ENCODE measurements at regions of chr19 and their contacts with region 1.

Region 1: DNA sequence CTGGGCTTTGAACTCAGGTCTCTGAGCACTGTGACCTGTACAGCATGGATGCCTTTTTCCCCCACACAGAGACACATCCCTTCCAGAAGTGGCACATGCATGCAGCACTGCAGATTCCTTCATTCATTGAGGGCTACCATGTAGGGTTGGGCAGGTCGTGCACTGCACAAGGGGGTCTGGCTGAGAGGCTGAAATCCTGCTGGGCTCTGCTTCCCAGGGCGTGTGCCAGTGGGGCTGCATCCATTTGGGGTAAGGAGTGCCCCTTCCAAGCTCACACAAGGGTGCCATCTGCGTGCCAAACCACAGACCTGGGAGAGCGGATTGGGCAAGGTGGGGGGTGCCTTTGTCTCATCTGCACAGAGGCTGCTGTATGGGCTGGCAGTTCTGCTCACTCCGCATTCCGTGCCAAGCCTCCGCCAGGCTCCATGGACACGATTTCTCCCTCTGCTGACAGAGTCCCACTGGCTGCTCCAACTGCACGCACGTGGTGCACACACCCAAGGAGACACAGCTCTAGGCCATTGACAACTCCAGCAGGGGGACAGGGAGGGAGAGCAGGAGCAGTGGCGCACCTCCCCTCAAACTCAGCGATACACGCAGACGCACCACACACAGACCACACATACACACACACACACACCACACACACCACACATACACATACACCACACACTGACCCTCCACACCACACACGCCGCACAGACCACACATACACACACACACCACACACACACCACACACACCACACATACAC is 4.5 kb upstream of the SHISA7 start:
- DNase-seq: peak; percentile 96
- H3K4me3 Mint-ChIP-seq: no peak overlapping the region
- H3K27ac Mint-ChIP-seq: no peak overlapping the region
- H3K4me1 Mint-ChIP-seq: peaks cover 27% of the 10 kb centered on the region
- H3K27me3 Mint-ChIP-seq: peaks cover 29% of the 10 kb centered on the region
- CTCF ChIP-seq: no peak

Region 2: DNA sequence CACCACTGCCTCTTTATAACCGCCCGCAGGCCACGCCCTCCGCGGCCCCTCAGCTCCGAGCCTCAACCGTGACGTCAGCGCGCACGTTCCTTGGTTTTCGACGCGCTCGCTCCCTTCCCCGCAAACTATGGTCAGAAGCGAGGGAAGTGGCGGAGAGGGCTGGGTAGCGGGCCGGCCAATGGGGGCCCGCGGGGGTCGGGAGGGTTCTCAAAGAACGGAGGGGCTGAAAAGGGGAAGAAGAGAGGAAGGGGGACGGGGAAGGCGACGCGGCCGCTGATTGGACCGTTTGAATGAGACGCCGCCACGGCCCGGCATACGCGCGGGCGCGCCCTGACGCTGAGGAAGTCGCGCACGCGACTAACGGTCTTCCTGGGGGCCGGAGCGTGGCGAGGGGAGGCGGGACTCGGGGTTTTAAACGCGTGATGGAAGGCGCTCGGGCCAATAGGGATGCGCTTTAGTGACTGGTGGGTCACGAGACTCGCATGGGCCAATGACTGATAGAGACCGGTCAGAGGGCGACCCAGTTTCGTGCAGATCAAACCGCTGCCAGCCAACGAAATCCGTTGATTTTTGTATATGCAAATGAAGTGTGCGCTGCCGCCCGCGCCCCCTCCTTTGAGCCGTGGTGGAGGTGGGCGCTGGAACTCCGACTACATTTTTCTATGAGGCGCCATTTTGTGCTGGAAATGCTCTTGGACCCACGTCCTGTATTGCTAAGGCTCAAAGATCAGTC is 39.6 kb before region 1 on chr19:
- CTCF ChIA-PET with region 1: no interaction called
- POLR2A ChIA-PET with region 1: interaction called, 16 read pairs
- intact Hi-C with region 1: no loop called
- DNase-seq: peak; percentile 100
- H3K4me3 Mint-ChIP-seq: peak overlapping the region; percentile 94
- H3K27ac Mint-ChIP-seq: peak overlapping the region; percentile 99
- H3K4me1 Mint-ChIP-seq: peaks cover 21% of the 10 kb centered on the region
- H3K27me3 Mint-ChIP-seq: no peaks in the 10 kb centered on the region
- CTCF ChIP-seq: no peak

Region 3: GRCh38 chr19:55432241-55432959 is 15.2 kb before region 1 on chr19:
- CTCF ChIA-PET with region 1: interaction called, 3 read pairs
- POLR2A ChIA-PET with region 1: interaction called, 8 read pairs
- intact Hi-C with region 1: loop called (anchors 2 kb)
- DNase-seq: no peak
- H3K4me3 Mint-ChIP-seq: no peak overlapping the region
- H3K27ac Mint-ChIP-seq: no peak overlapping the region
- H3K4me1 Mint-ChIP-seq: peaks cover 3% of the 10 kb centered on the region
- H3K27me3 Mint-ChIP-seq: no peaks in the 10 kb centered on the region
- CTCF ChIP-seq: no peak

Region 4: GRCh38 chr19:55461259-55461973 is 13.8 kb after region 1 on chr19 and contains the start of gene ISOC2:
- CTCF ChIA-PET with region 1: interaction called, 4 read pairs
- POLR2A ChIA-PET with region 1: interaction called, 12 read pairs
- intact Hi-C with region 1: no loop called
- DNase-seq: peak; percentile 100
- H3K4me3 Mint-ChIP-seq: peak within 1 kb of the TSS; percentile 97
- H3K27ac Mint-ChIP-seq: peak within 1 kb of the TSS; percentile 83
- H3K4me1 Mint-ChIP-seq: peaks cover 17% of the 10 kb centered on the region
- H3K27me3 Mint-ChIP-seq: no peaks in the 10 kb centered on the region
- CTCF ChIP-seq: no peak
- total RNA-seq, gene ISOC2: 34.3 and 59.9 TPM in 2 replicates

Region 5: GRCh38 chr19:55494172-55494761 is 46.7 kb after region 1 on chr19:
- CTCF ChIA-PET with region 1: no interaction called
- POLR2A ChIA-PET with region 1: no interaction called
- intact Hi-C with region 1: no loop called
- DNase-seq: peak; percentile 19
- H3K4me3 Mint-ChIP-seq: no peak overlapping the region
- H3K27ac Mint-ChIP-seq: no peak overlapping the region
- H3K4me1 Mint-ChIP-seq: peaks cover 17% of the 10 kb centered on the region
- H3K27me3 Mint-ChIP-seq: no peaks in the 10 kb centered on the region
- CTCF ChIP-seq: no peak

Measured in MCF 10A (cell line).